Panc1 (cell line): ENCODE measurements at regions of chr20 and their contacts with region 1.

Region 1: DNA sequence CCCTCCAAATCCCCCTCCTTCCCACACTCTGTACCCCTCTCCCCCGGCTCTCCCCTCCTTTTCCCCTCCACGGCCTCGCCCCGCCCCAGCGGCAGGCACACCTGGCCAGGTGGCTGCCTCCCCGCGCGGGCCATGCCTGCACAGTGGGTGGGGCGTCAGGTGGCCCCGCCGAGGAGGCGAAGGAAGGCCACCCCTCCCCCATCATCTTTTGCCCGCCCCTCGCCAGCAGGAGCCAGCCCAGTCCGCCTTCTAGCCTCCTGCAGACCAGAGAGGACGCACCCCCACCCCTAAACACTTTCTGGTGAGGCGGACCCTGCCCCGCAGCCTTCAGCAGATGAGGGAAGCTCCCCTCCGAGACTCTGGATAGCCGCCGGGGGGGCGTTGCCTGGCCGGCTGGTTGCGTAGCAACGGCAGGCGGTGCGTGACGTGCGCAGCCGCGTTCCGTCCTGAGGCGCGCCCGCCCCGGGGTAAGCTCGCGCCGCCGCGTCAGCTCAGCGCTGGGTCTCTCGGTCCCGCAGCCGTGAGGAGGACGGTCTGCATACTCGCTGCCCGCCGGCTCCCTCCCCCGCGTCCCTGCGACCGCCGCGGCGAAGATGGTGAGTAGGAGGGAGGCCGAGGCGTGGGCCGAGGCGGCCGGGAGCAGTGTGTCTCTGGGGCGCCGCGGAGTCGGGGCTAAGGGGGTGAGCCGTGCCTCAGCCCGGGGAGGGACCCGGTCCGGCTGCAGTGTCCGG is at the start of gene DSTN:
- DNase-seq: peak; percentile 78
- ATAC-seq: peak; percentile 84
- H3K4me3 ChIP-seq: peak within 1 kb of the TSS; percentile 88 to 95
- H3K27ac ChIP-seq: peak within 1 kb of the TSS; percentile 99
- H3K4me1 ChIP-seq: peaks cover 57% of the 10 kb centered on the region
- H3K27me3 ChIP-seq: no peaks in the 10 kb centered on the region
- CTCF ChIP-seq: no peak
- total RNA-seq, gene DSTN: 412 TPM

Region 2: GRCh38 chr20:17536944-17537444 is 32.8 kb before region 1 on chr20:
- CTCF ChIA-PET with region 1: interaction called, 9 read pairs
- POLR2A ChIA-PET with region 1: interaction called, 5 read pairs
- in situ Hi-C with region 1: no loop called
- intact Hi-C with region 1: loop called (anchors 2 kb)
- DNase-seq: peak; percentile 82
- ATAC-seq: peak; percentile 99
- H3K4me3 ChIP-seq: peak overlapping the region in 1 of 2 experiments; percentile 15; a peak in 1 of 4 replicates
- H3K27ac ChIP-seq: peak overlapping the region; percentile 76
- H3K4me1 ChIP-seq: peaks cover 33% of the 10 kb centered on the region
- H3K27me3 ChIP-seq: no peaks in the 10 kb centered on the region
- CTCF ChIP-seq: peak; percentile 89

Region 3: DNA sequence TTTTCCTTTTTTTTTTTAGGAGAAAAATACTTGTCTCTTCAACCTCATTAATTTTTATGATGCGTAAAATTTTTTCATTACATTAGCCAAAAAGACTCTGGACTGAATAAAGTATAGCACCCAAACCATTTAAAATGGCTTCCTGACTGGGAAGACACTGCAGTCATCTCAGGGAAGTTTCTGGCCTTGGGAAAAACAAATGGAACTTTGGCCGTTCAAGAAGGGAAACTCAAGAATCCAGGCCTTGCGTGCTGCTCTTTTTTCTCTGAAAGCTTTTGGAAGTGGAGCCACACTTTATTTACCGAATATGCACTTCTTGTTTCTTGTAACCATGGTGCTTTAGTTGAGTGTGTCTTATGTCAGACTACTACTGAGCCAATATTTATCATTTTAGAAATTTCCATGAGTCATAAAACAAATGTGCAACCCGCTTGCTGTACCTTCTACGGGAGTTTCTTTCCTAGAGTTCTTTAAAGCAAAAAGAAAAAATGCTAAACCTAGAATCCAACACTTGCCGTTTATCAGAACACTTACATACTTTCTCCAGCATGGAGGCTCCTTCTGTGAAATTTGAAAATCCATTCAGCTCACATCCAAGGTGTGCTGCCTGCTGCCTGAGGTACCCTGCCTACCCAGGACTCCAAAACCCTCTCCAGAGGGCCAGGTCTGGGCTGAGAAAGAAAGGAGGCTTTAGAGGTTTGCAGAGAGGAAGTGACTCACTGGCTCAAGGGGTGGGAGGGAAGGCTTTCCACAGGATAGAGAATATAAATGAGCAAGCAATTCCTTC is 11.4 kb before region 1 on chr20:
- CTCF ChIA-PET with region 1: no interaction called
- POLR2A ChIA-PET with region 1: interaction called, 36 read pairs
- in situ Hi-C with region 1: no loop called
- intact Hi-C with region 1: no loop called
- DNase-seq: peak; percentile 96
- ATAC-seq: peak; percentile 92
- H3K4me3 ChIP-seq: peak overlapping the region; percentile 33 to 45
- H3K27ac ChIP-seq: peak overlapping the region; percentile 100
- H3K4me1 ChIP-seq: peaks cover 60% of the 10 kb centered on the region
- H3K27me3 ChIP-seq: no peaks in the 10 kb centered on the region
- CTCF ChIP-seq: no peak

Region 4: DNA sequence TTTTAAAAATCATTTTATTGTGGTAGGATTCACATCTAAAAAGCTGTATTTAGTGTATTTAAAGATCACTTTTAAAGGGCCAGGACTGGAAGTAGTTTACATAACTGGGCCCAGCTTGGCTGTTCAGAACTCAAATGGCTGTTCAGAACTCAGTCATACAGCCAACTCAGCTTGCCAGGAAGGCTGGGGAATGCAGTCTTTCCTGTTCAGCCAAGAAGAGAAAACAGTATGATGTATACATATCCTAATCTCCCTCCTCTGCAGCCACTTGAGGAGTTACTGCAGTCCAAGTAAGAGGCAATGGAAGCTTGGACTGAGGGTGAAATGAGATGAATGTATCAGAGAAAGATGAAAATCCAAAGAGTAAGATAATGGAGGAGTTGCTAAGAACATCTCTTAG is 24.7 kb after region 1 on chr20:
- CTCF ChIA-PET with region 1: no interaction called
- POLR2A ChIA-PET with region 1: interaction called, 11 read pairs
- in situ Hi-C with region 1: no loop called
- intact Hi-C with region 1: no loop called
- DNase-seq: no peak
- ATAC-seq: no peak
- H3K4me3 ChIP-seq: no peak overlapping the region
- H3K27ac ChIP-seq: no peak overlapping the region
- H3K4me1 ChIP-seq: peaks cover 35% of the 10 kb centered on the region; the same call in 1 of the 2 replicates
- H3K27me3 ChIP-seq: no peaks in the 10 kb centered on the region
- CTCF ChIP-seq: no peak

Region 5: GRCh38 chr20:17925141-17925939 is 355.6 kb after region 1 on chr20:
- CTCF ChIA-PET with region 1: no interaction called
- POLR2A ChIA-PET with region 1: interaction called, 14 read pairs
- in situ Hi-C with region 1: no loop called
- intact Hi-C with region 1: no loop called
- DNase-seq: no peak
- ATAC-seq: no peak
- H3K4me3 ChIP-seq: no peak overlapping the region
- H3K27ac ChIP-seq: no peak overlapping the region
- H3K4me1 ChIP-seq: no peaks in the 10 kb centered on the region
- H3K27me3 ChIP-seq: no peaks in the 10 kb centered on the region; the same call in 1 of the 2 replicates
- CTCF ChIP-seq: no peak